ENCODE measurements at regions of chr15 and their contacts with region 1.

Region 1: DNA sequence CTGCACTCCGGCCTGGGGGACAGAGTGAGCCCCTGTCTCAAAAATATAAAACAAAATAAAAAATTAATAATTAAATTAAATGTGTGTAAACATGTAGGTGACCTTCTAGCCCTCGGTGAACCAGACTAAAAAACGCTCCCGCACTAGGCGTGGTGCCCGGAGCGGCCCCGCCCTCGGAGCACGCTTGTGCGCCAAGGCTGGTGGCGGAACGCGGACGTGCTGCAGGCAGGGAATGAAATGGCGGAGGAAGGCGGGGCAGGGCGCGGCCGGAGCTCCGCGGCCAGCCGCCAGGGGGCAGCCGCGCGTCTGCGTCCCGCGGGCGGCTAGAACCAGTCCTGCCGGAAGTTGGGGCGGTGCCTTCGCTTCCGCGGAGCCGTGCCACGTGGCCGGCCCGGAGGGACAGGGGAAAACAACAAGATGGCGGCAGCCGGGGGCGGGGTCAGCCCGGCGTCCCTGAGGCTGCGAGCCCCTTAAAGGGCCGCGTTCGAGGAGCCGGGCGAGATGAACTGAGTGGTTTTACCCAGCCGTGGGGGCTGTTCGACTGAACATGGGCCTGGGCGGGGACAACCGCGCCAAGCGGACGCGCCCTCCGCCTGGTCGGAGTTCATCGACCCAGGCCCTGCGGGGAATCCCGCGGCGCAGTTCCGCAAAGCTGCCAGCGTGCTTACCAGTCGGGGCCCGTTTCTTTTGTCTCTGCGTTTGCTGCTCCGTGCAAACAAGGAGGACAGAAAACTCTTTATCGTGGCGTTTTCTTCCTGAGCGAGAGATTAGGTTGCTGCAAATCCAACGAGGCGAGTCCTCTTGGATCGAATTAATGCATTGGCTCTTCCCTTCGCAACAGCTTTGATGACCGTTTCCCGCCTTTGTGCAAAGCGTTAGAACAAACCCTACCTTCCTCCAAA is 90.9 kb upstream of the CHD2 start:
- DNase-seq: peak; percentile 95
- ATAC-seq: peak; percentile 86
- H3K4me3 ChIP-seq: peak overlapping the region; percentile 53 to 76 (median 68); a peak in 5 of 6 replicates
- H3K27ac ChIP-seq: peak overlapping the region; percentile 98
- H3K4me1 ChIP-seq: peaks cover 48% of the 10 kb centered on the region
- H3K27me3 ChIP-seq: no peaks in the 10 kb centered on the region; a peak in 1 of 5 replicates
- CTCF ChIP-seq: peak; percentile 89
- EP300 ChIP-seq: peak in 1 of 2 experiments; percentile 45; a peak in 2 of 4 replicates
- POLR2A ChIP-seq: peak; percentile 84 to 95
- RAD21 ChIP-seq: peak; percentile 99

Region 2: DNA sequence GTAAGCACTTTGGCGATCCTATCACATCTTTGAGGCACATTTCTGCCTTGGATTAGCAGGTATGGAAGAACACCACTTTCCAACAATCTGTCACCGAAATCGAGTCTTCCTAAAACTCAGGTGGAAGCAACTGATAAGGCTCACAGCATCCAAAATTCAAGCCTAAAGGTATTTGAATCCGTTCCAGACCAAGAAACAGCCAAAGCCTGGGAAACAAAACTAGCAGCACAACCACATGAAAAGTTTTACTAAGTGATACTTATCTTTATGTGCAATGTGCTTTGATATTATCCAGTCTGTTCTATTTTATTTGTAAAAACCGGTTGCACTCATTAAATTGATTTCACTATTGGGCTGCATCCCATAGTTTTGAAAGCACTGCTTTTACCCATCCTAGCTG is 113.1 kb before region 1 on chr15:
- CTCF ChIA-PET with region 1: no interaction called
- POLR2A ChIA-PET with region 1: no interaction called
- in situ Hi-C with region 1: no loop called
- intact Hi-C with region 1: no loop called
- DNase-seq: no peak
- ATAC-seq: no peak
- H3K4me3 ChIP-seq: no peak overlapping the region
- H3K27ac ChIP-seq: no peak overlapping the region
- H3K4me1 ChIP-seq: no peaks in the 10 kb centered on the region
- H3K27me3 ChIP-seq: 0 out of 5 replicates have a peak, but pooled peaks cover 0 to 3% of the 10 kb centered on the region in 2 experiments
- CTCF ChIP-seq: no peak
- EP300 ChIP-seq: no peak
- POLR2A ChIP-seq: no peak
- RAD21 ChIP-seq: no peak

Region 3: DNA sequence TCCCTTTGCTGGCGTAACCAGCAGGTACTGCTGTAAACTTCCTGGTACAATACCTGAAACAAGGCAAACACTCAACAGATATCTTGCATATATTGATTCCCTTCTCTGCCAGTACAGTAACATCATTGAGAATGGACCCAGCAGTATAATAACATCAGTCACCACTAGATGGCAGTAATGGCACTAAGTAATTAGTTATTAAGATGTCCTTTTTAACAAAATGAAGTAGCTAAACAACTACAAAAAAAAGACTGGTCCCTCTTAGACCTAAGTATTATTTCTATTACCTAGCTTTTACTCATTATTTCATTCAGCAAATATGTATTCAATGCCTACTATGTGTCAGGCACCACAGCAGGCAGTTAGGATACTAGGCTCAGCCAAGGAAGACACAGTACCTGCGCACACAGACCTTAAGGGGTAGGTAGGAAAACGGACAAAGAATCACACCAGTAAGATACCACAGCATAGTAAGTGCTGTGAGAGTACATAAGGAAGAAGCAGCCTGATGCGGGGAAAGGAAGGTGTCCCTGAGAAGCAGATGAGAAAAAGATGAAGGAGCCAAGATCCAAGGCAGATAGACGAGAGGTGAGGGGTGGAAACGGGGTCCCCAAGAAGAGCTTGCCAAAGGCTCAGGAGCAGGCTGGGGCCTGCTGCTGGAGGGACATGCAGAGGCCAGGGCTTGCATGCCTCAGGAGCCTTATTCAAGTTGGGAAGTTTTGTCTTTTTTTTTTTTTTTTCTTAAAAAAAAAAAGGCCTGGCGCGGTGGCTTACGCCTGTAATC is 11.9 kb before region 1 on chr15:
- CTCF ChIA-PET with region 1: no interaction called
- POLR2A ChIA-PET with region 1: interaction called, 67 read pairs
- in situ Hi-C with region 1: no loop called
- intact Hi-C with region 1: no loop called
- DNase-seq: peak; percentile 78
- ATAC-seq: peak; percentile 27
- H3K4me3 ChIP-seq: peak overlapping the region in 2 of 3 experiments; percentile 46 to 65; a peak in 1 of 6 replicates
- H3K27ac ChIP-seq: peak overlapping the region; percentile 15
- H3K4me1 ChIP-seq: peaks cover 46% of the 10 kb centered on the region
- H3K27me3 ChIP-seq: no peaks in the 10 kb centered on the region
- CTCF ChIP-seq: peak; percentile 74
- EP300 ChIP-seq: no peak
- POLR2A ChIP-seq: no peak
- RAD21 ChIP-seq: peak; percentile 27; the same call in 1 of the 2 replicates

Region 4: DNA sequence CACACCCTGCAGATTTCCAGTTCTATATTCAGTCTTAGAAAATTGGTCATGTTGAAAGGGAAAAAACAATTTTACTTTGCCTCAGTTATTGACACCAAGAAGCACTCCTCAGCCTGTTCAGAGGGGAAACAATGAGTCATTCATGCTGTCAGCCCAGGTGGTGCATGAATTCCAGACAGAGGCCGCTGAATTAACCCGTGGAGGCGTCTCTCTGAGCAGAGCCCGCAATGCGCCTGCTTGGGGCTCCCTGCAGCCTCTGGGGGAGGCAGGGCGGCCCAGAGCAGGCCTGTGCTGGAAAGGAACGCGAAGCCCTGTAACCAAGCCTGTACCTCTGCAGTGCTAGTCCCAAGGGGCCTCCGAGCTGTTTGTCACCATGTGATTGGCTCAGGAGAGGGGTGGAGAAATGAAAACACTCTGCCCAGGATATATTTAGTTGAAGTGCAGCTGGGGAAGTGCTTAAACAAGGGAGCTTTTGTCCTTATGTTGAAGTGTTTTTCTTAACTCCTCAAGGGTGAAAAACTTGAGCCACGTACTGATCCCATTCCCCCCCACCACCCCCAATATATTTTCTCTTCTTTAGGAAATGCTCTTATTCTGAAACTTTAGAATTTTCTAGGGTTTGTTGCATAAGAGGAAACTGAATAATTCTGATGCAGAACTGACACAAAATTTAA is 22.6 kb after region 1 on chr15:
- CTCF ChIA-PET with region 1: no interaction called
- POLR2A ChIA-PET with region 1: interaction called, 122 read pairs
- in situ Hi-C with region 1: no loop called
- intact Hi-C with region 1: loop called (anchors 1 kb)
- DNase-seq: peak; percentile 98
- ATAC-seq: peak; percentile 100
- H3K4me3 ChIP-seq: peak overlapping the region; percentile 52 to 55 (median 54)
- H3K27ac ChIP-seq: peak overlapping the region; percentile 95
- H3K4me1 ChIP-seq: peaks cover 37% of the 10 kb centered on the region
- H3K27me3 ChIP-seq: no peaks in the 10 kb centered on the region
- CTCF ChIP-seq: peak; percentile 31
- EP300 ChIP-seq: peak; percentile 54 to 67; a peak in 3 of 4 replicates
- POLR2A ChIP-seq: peak; percentile 86 to 93
- RAD21 ChIP-seq: peak; percentile 69

Region 5: DNA sequence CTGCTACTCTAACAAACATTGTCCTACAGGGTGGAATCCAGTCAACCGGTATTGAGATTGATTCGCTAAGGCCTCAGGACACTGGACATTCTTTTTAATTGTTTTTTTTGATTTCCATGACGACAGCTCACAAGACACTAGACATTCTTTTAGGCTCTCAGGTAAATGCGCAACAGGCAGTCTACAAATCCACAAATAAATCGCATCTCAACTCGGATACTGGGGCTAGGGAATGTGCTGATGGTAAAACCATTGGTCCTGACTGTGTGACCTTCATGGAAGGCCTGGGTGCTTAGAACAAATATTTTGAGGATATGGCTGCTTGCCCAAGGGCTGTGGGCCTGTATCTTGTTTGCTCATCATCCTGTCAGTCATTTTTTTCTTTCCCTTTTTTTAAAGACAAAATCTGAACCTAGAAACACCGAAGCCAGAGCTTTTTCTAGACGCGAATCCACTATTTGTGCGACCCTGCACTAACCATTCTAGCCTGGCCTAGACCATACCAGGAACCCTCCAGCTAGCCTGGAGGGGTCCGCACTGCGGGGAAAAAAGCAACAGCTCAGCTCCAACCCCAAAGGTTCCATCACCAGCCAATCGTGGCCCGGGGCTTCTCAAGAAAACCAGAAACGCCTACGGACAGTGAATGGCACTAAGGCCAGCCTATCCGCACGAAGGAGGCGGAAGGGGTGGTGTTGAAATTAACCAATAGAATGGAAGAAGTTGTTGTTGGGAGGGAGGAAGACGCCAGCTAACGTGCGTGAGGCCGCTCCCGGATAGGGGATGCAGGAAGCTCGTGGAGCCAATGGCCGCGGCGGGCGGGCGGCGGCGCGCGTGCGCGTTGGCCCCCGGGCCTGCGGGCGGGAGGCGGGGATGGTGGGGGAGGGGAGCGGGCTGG is 72.8 kb after region 1 on chr15:
- CTCF ChIA-PET with region 1: no interaction called
- POLR2A ChIA-PET with region 1: interaction called, 211 read pairs
- in situ Hi-C with region 1: loop called (anchors 5 kb)
- intact Hi-C with region 1: loop called (anchors 1 kb)
- DNase-seq: peak; percentile 99
- ATAC-seq: peak; percentile 96
- H3K4me3 ChIP-seq: peak overlapping the region; percentile 59 to 67 (median 62)
- H3K27ac ChIP-seq: peak overlapping the region; percentile 90
- H3K4me1 ChIP-seq: peaks cover 56% of the 10 kb centered on the region
- H3K27me3 ChIP-seq: peaks cover 0 to 4% of the 10 kb centered on the region in 2 experiments; a peak in 1 of 5 replicates
- CTCF ChIP-seq: no peak
- EP300 ChIP-seq: no peak
- POLR2A ChIP-seq: peak; percentile 92 to 96
- RAD21 ChIP-seq: 0 out of 2 replicates have a peak, but pooled peaks have one; percentile 27

Region 6: GRCh38 chr15:92903941-92904831 is 95.0 kb after region 1 on chr15:
- CTCF ChIA-PET with region 1: no interaction called
- POLR2A ChIA-PET with region 1: interaction called, 185 read pairs
- in situ Hi-C with region 1: no loop called
- intact Hi-C with region 1: loop called (anchors 1 kb)
- DNase-seq: peak; percentile 96
- ATAC-seq: peak; percentile 90
- H3K4me3 ChIP-seq: peak overlapping the region; percentile 88 to 90 (median 89)
- H3K27ac ChIP-seq: peak overlapping the region; percentile 100
- H3K4me1 ChIP-seq: peaks cover 47% of the 10 kb centered on the region
- H3K27me3 ChIP-seq: no peaks in the 10 kb centered on the region; a peak in 1 of 5 replicates
- CTCF ChIP-seq: no peak; the same call in 1 of the 2 replicates
- EP300 ChIP-seq: peak in 1 of 2 experiments; percentile 54; a peak in 1 of 4 replicates
- POLR2A ChIP-seq: peak; percentile 85 to 99
- RAD21 ChIP-seq: peak; percentile 75

Region 7: GRCh38 chr15:92933831-92934230 is 124.6 kb after region 1 on chr15:
- CTCF ChIA-PET with region 1: no interaction called
- POLR2A ChIA-PET with region 1: interaction called, 12 read pairs
- in situ Hi-C with region 1: no loop called
- intact Hi-C with region 1: no loop called
- DNase-seq: no peak
- ATAC-seq: no peak
- H3K4me3 ChIP-seq: no peak overlapping the region
- H3K27ac ChIP-seq: peak overlapping the region; percentile 42
- H3K4me1 ChIP-seq: peaks cover 56% of the 10 kb centered on the region
- H3K27me3 ChIP-seq: no peaks in the 10 kb centered on the region
- CTCF ChIP-seq: no peak
- EP300 ChIP-seq: no peak
- POLR2A ChIP-seq: no peak
- RAD21 ChIP-seq: no peak

Measured in HepG2 (cell line).